Activated CD8-positive, alpha-beta T cell treated with anti-CD3 and anti-CD28 coated beads, Interleukin-2, amount 10 ng/mL, durations not matched to agents 7 days and 5 days (primary cell): ENCODE measurements at regions of chr6 and their contacts with region 1.

Region 1: GRCh38 chr6:75284632-75285286 is at the start of gene TMEM30A:
- DNase-seq: peak; percentile 98
- ATAC-seq: peak; percentile 95
- H3K4me3 Mint-ChIP-seq: no peak within 1 kb of the TSS
- H3K27ac Mint-ChIP-seq: no peak within 1 kb of the TSS
- H3K4me1 Mint-ChIP-seq: peaks cover 44% of the 10 kb centered on the region
- H3K27me3 Mint-ChIP-seq: no peaks in the 10 kb centered on the region
- total RNA-seq, gene TMEM30A: 50.2 to 56.4 TPM

Region 2: GRCh38 chr6:75266716-75267291 is 18.0 kb before region 1 on chr6:
- CTCF ChIA-PET with region 1: interaction called, 101 read pairs
- POLR2A ChIA-PET with region 1: interaction called, 15 read pairs
- DNase-seq: no peak
- ATAC-seq: peak; percentile 65
- H3K4me3 Mint-ChIP-seq: no peak overlapping the region
- H3K27ac Mint-ChIP-seq: no peak overlapping the region
- H3K4me1 Mint-ChIP-seq: peaks cover 13% of the 10 kb centered on the region
- H3K27me3 Mint-ChIP-seq: no peaks in the 10 kb centered on the region

Region 3: GRCh38 chr6:75272145-75272840 is 12.5 kb before region 1 on chr6:
- CTCF ChIA-PET with region 1: interaction called, 101 read pairs
- POLR2A ChIA-PET with region 1: interaction called, 15 read pairs
- DNase-seq: no peak
- ATAC-seq: no peak
- H3K4me3 Mint-ChIP-seq: no peak overlapping the region
- H3K27ac Mint-ChIP-seq: peak overlapping the region; percentile 31
- H3K4me1 Mint-ChIP-seq: peaks cover 43% of the 10 kb centered on the region
- H3K27me3 Mint-ChIP-seq: no peaks in the 10 kb centered on the region